Left cardiac atrium (tissue), 4 donors: ENCODE measurements at regions of chr3 and their contacts with region 1.

Region 1: GRCh38 chr3:192758654-192759053 is 31.3 kb upstream of the FGF12 start:
- DNase-seq: no peak
- ATAC-seq: no peak

Region 2: DNA sequence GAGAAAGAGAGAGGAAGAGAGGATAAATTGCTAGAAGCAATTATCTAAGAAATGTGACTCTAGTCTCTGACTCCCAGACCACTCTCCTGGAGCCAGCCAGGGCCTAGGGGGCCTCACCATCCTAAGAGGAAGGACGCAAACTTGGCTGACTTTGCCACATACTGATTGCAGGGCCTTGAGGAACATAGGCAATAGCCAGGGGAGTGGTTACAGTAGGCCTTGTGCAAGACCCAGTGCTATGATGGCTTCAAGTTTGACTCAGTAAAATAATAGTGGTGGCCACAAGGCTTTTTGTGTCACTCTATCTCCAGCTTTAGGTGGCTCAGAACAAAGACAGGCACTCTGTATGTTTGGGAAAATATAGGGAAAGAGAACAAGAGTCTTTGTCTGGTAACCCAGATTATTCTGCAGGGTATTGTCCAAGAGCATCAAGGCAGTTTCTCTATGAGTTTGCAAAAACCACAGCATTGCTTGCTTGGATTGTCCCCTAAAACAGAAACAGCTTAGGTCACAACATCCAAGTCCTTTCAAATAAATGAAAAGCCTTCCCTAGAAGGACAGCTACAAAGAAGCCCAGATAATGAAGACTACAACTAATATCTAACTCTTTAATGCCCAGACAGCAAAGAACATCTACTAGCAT is 666.2 kb before region 1 on chr3:
- intact Hi-C with region 1: no loop called
- DNase-seq: no peak
- ATAC-seq: no peak

Region 3: GRCh38 chr3:192700885-192701284 is 57.8 kb before region 1 on chr3:
- intact Hi-C with region 1: loop called in 1 of 2 experiments (anchors 2 kb)
- DNase-seq: no peak
- ATAC-seq: no peak

Region 4: GRCh38 chr3:192802957-192803899 is 44.6 kb after region 1 on chr3:
- intact Hi-C with region 1: no loop called
- DNase-seq: no peak
- ATAC-seq: peak; percentile 62 to 71

Region 5: DNA sequence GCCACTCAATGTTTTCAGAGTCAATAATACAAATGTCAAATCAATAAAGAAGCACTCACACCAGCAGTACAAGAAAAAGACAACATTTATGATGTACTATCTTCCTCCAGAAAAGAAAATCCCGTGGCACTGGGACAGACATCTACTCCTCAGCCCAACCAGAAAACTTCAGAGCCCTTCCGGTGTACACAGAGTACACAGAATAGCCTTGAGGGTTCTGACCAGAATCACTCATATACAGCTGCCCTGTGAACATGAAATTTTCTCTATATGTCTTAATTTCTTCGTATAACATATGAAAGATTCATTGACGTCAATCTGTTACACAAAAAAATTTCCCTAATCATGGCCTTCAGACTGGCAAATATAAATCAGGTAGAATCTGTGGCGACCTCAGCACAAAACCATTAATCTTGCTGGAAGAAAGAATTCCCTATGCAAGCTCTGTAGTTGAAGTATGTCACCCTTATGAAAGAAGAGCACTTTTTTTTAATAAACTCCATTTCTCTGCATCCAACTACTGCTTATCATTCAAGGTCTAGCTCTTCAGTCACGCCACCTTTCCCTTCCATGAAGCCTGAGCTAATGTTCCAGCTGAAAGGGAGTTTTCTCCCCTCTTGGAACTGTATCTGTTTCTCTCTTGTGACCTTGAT is 428.5 kb after region 1 on chr3:
- intact Hi-C with region 1: no loop called
- DNase-seq: no peak
- ATAC-seq: no peak